CD8-positive, alpha-beta T cell (primary cell): ENCODE measurements at regions of chr17 and their contacts with region 1.

Region 1: DNA sequence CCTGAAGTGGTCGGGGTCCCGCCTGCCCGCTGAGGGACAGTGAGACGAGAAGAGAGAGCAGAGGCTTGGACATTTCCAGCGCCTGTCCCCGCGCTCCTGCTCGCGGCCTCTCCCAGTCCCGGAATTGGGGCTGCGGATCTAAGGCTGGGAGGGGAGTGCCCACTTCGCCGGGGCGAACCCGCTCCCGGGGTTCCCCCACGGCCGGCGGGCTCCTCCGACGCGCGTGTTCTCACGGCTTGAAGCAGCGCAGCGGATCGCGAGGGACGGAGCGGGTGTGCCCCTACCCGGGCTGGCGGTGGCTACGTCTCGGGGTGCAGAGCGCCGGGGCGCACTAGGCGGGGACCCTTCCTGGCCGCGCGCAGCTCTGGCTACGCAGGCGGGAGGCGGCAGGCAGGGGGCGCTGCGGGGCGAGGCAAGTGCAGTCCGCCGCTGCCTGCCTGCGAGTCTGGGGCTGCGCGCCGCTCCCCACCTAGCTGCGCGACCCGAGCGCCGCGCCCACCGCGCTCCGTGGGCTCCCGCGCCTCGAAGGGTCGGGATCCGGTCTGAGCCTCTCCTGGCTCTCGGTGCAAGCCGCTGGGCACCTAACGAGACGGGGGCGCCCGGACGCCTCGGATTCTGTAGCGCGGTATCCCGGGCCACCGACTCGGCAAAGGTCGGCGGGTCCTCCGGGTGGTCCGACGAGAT is 1.2 kb downstream of the NGFR start:
- DNase-seq: peak; percentile 74 to 91 (median 85)
- ATAC-seq: peak; percentile 83
- H3K4me3 ChIP-seq: peak overlapping the region; percentile 53 to 67
- H3K4me3 Mint-ChIP-seq: peak overlapping the region; percentile 79
- H3K27ac ChIP-seq: no peak overlapping the region
- H3K27ac Mint-ChIP-seq: no peak overlapping the region
- H3K4me1 ChIP-seq: peaks cover 33% of the 10 kb centered on the region
- H3K4me1 Mint-ChIP-seq: peaks cover 28% of the 10 kb centered on the region
- H3K27me3 ChIP-seq: peaks cover 28 to 29% of the 10 kb centered on the region in 2 experiments
- H3K27me3 Mint-ChIP-seq: peaks cover 36% of the 10 kb centered on the region
- CTCF ChIP-seq: peak; percentile 89

Region 2: DNA sequence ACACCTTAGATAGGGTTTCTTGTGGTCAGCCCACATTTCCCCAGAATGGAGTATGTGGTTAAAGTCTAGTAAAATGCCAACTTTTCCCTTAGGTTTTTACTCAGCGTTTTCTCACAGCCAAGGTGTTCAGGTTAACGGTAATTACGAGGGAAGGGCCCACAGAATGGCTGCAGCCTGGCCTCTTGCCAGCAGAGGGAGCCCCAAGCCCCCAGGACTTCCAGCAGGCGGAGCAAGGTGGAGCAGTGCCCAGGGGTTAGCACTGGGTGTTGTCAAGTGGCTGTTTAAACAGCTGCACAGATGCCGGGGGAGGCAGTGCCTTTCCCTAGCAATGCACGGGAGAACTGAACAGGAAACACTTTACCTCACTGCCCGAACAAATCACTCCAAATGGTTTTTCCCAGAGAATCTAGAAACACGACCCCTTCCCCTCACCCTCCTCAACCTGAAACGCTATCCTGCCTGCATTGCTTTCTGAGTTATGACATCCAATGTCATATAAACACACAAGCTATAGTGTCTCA is 88.3 kb before region 1 on chr17:
- CTCF ChIA-PET with region 1: no interaction called
- POLR2A ChIA-PET with region 1: no interaction called
- intact Hi-C with region 1: loop called (anchors 1 to 5 kb)
- DNase-seq: peak; percentile 76 to 90 (median 85)
- ATAC-seq: peak; percentile 97
- H3K4me3 ChIP-seq: no peak overlapping the region
- H3K4me3 Mint-ChIP-seq: no peak overlapping the region
- H3K27ac ChIP-seq: peak overlapping the region in 1 of 2 experiments; percentile 1
- H3K27ac Mint-ChIP-seq: peak overlapping the region; percentile 17
- H3K4me1 ChIP-seq: peaks cover 27% of the 10 kb centered on the region
- H3K4me1 Mint-ChIP-seq: peaks cover 36% of the 10 kb centered on the region
- H3K27me3 ChIP-seq: no peaks in the 10 kb centered on the region
- H3K27me3 Mint-ChIP-seq: no peaks in the 10 kb centered on the region
- CTCF ChIP-seq: peak; percentile 94